ENCODE measurements at regions of chrX and their contacts with region 1.

Region 1: GRCh38 chrX:130902783-130903613 is at the start of gene ENOX2:
- DNase-seq: peak; percentile 95
- ATAC-seq: peak; percentile 99
- total RNA-seq, gene ENOX2: 14.7 TPM

Region 2: GRCh38 chrX:130401415-130402207 is 501.4 kb before region 1 on chrX and contains the start of gene RBMX2:
- intact Hi-C with region 1: loop called (anchors 5 kb)
- DNase-seq: peak; percentile 87
- ATAC-seq: peak; percentile 97
- total RNA-seq, gene RBMX2: 9.9 TPM

Region 3: DNA sequence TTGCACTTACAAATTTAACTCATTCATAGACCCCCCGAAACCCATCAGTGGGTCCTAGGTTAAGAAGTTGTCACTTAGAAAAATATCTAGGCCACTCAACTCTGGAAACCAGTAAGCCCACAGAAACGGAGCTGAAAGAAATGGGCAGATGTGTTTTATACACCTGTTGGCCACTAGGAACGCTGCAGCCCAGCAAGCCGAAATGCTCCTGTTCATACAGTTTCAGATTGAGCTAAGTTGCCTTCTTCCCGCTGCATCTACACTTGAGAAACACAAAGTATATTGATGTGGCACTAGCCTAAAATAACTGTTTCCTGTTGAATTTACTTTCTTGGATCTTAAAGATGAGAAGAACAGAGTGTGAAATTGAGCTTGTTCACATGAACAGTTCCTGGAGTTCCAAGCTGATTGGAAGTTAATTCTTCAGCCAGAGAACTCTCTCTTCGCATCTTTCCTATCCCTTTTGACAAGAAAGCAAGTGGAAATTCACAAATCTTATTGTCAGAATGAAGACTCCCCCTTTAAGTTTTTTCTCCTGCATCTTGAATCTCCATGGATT is 327.1 kb before region 1 on chrX:
- intact Hi-C with region 1: loop called (anchors 5 kb)
- DNase-seq: no peak
- ATAC-seq: no peak

Region 4: DNA sequence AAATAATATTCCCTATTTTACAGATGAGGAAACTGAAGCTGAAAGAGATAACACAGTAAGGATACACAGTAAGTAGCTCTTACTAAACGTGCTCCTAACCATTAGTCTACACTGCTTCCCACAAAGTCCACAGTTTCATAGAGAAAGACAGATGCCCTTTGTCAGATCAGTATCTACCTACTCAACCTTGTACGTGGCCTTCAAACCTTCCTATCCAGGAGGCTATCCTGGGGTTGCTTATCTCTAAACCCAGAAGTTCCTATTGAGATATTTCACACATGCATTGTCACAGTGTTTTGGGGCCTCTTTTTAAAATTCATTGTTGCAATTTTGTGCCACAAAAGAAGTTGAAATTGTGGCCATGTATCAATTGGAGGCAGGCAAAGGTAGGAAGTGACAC is 208.0 kb before region 1 on chrX:
- intact Hi-C with region 1: loop called (anchors 5 kb)
- DNase-seq: no peak
- ATAC-seq: no peak

Measured in Right ventricle myocardium inferior (tissue), 1 donor.